ENCODE measurements at regions of chr9 and their contacts with region 1.

Region 1: DNA sequence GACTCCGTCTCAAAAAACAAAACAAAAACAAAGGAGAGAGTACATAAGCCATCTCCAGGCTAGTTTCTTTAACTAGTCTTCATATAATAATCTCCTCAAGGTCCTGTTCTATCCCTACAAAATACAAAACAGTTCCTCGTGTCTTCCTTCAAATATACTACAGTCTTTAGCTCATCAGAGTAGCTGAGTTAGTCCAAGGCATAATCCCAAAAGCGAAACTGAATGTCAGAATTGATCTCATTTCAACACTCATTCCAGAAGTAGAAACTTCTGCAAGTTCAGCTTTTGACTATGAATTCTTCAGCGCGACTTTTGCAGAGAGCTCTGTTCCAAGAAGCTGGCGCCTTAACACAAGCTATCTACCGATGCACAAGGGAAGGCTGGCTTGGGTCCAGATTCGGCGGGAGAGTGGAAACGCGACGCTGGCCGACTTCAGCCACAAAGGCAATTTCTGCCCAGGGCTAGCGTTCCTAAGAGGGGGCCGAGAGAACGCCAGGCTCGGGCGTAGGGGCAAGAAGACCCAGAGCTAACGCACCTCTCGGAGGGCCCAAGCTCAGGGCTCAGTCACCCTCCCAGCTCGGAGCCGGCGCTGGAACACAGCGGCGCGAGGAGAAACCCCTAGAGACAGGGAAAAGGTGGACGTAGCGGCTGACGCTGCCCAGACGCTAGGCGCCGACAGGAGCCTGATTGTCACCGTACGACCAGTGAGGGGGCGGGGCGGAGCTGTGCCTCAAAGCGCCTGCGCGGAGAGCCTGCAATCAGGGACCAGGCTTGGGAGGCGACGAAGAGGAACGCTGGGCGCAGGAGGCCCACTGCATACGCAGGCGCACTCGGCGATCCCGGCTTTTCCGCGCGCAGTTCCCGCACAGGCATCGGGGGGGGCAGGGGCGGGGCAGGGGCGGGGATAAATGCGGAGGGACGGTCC is 469 bp upstream of the HSDL2 start:
- DNase-seq: peak; percentile 97
- H3K4me3 Mint-ChIP-seq: peak overlapping the region; percentile 98
- H3K27ac Mint-ChIP-seq: peak overlapping the region; percentile 99
- H3K4me1 Mint-ChIP-seq: peaks cover 52% of the 10 kb centered on the region
- H3K27me3 Mint-ChIP-seq: no peaks in the 10 kb centered on the region

Region 2: GRCh38 chr9:111631071-111631971 is 748.1 kb before region 1 on chr9 and contains the start of gene DNAJC25:
- intact Hi-C with region 1: loop called (anchors 1 kb)
- DNase-seq: peak; percentile 97
- H3K4me3 Mint-ChIP-seq: peak within 1 kb of the TSS; percentile 98
- H3K27ac Mint-ChIP-seq: peak within 1 kb of the TSS; percentile 93
- H3K4me1 Mint-ChIP-seq: peaks cover 54% of the 10 kb centered on the region
- H3K27me3 Mint-ChIP-seq: peaks cover 3% of the 10 kb centered on the region
- total RNA-seq, gene DNAJC25: 5.8 and 6.1 TPM in 2 replicates

Region 3: GRCh38 chr9:112097712-112098688 is 281.4 kb before region 1 on chr9:
- intact Hi-C with region 1: loop called (anchors 5 kb)
- DNase-seq: peak; percentile 54
- H3K4me3 Mint-ChIP-seq: no peak overlapping the region
- H3K27ac Mint-ChIP-seq: no peak overlapping the region
- H3K4me1 Mint-ChIP-seq: peaks cover 32% of the 10 kb centered on the region
- H3K27me3 Mint-ChIP-seq: peaks cover 2% of the 10 kb centered on the region

Region 4: DNA sequence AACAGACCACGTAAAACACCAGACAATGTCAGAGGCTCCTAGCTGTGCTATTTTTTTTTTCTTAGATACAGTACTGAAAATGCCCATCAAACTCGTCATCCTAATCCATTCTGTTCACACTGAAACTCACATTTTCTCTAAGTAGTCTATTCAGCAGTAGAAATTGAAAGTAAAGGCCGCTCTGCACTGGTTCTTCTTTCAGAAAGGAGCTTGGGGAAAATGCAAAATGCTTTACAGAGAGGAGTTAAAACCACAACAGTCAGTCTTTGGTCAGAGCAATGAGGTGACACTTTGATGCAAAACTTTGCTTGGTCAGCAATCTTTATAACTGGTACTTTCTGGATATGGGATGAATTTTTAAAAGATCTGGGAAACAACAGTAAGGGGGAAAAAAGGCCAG is 160.5 kb before region 1 on chr9:
- intact Hi-C with region 1: loop called (anchors 1 kb)
- DNase-seq: peak; percentile 9
- H3K4me3 Mint-ChIP-seq: peak overlapping the region; percentile 19
- H3K27ac Mint-ChIP-seq: peak overlapping the region; percentile 70
- H3K4me1 Mint-ChIP-seq: peaks cover 26% of the 10 kb centered on the region
- H3K27me3 Mint-ChIP-seq: no peaks in the 10 kb centered on the region

Region 5: DNA sequence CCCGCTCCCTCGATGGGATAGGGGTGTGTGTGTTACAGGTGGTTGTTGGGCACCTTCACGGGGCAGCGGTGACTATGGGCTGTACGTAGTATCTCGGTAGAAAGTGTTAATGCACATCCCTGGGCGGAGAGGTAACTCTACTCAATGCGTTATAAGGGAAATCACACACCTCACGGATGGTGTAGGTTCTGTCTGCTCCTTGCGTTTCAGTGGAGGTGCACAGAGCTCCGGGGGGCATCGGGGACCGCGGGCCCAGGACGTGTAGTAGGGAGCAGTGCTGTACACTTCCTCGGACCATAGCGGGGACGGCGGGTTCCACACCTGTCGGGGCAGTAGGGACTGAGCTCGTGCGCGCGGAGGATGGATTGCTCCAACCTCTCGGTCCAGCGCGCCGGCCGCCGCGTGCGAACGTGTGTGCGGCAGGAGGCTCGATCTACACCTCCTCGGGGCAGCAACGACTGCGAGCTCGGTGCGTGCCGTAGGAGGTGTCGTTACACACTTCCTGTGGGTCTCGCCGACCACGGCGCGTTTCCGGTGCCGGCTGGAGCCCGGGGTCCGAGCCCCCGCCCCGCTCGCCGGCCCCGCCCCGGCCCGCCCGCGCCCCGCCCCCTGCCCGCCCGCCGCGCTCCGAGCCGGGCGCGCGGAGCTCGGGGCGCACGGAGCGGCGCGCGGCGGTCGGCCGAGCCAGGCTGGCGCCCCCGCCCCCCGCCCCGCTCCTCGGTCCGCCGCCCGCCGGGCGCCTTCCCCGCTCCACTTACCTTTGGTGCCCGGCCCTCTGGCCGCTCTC is 107.0 kb after region 1 on chr9 and contains the start of gene KIAA1958:
- intact Hi-C with region 1: loop called (anchors 1 kb)
- DNase-seq: peak; percentile 85
- H3K4me3 Mint-ChIP-seq: peak within 1 kb of the TSS; percentile 97
- H3K27ac Mint-ChIP-seq: peak within 1 kb of the TSS; percentile 96
- H3K4me1 Mint-ChIP-seq: peaks cover 36% of the 10 kb centered on the region
- H3K27me3 Mint-ChIP-seq: peaks cover 2% of the 10 kb centered on the region
- total RNA-seq, gene KIAA1958: 8.2 and 8.6 TPM in 2 replicates

Region 6: GRCh38 chr9:112647596-112647995 is 268.2 kb after region 1 on chr9:
- intact Hi-C with region 1: no loop called
- DNase-seq: no peak
- H3K4me3 Mint-ChIP-seq: no peak overlapping the region
- H3K27ac Mint-ChIP-seq: no peak overlapping the region
- H3K4me1 Mint-ChIP-seq: no peaks in the 10 kb centered on the region
- H3K27me3 Mint-ChIP-seq: no peaks in the 10 kb centered on the region

Region 7: GRCh38 chr9:112793213-112793810 is 413.9 kb after region 1 on chr9:
- intact Hi-C with region 1: loop called (anchors 1 kb)
- DNase-seq: peak; percentile 67
- H3K4me3 Mint-ChIP-seq: no peak overlapping the region
- H3K27ac Mint-ChIP-seq: no peak overlapping the region
- H3K4me1 Mint-ChIP-seq: peaks cover 7% of the 10 kb centered on the region
- H3K27me3 Mint-ChIP-seq: peaks cover 4% of the 10 kb centered on the region